ENCODE measurements at regions of chr5 and their contacts with region 1.

Region 1: GRCh38 chr5:16544607-16545374 is 72.0 kb downstream of the RETREG1 start:
- DNase-seq: no peak
- ATAC-seq: peak; percentile 69 to 87 (median 84)
- H3K4me3 ChIP-seq: no peak overlapping the region
- H3K27ac ChIP-seq: peak overlapping the region; percentile 84
- H3K4me1 ChIP-seq: peaks cover 62% of the 10 kb centered on the region
- H3K27me3 ChIP-seq: no peaks in the 10 kb centered on the region
- CTCF ChIP-seq: no peak

Region 2: DNA sequence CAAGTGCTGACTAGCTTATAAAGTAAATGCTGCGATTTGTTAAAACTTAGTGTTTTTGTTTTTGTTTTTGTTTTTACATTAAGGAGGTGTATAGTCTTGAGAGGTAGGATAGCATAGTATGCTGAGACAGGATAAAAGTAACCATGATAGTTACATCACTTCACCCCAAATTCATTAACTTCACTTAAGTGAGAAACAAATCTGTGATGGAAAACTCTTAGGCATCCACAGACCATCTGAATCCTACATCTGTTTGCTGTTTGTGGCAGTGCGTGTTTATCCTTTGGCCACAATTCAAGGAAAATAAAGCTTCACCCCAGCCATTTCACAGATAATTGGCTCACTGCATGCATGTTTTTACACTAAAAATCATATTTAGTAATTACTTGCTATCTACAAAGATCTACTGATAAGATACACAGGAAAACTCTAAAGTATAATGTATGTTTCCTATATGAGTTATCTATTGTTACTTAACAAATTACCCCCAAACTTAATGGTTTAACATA is 161.2 kb before region 1 on chr5:
- intact Hi-C with region 1: no loop called
- DNase-seq: no peak
- ATAC-seq: no peak
- H3K4me3 ChIP-seq: no peak overlapping the region
- H3K27ac ChIP-seq: no peak overlapping the region
- H3K4me1 ChIP-seq: no peaks in the 10 kb centered on the region
- H3K27me3 ChIP-seq: peaks cover 0 to 5% (median 0%) of the 10 kb centered on the region in 3 donors
- CTCF ChIP-seq: no peak

Region 3: GRCh38 chr5:16508730-16509531 is 35.9 kb before region 1 on chr5:
- intact Hi-C with region 1: loop called (anchors 2 to 5 kb)
- DNase-seq: peak; percentile 66 to 92
- ATAC-seq: peak; percentile 89 to 97 (median 92)
- H3K4me3 ChIP-seq: peak overlapping the region; percentile 68
- H3K27ac ChIP-seq: peak overlapping the region; percentile 95
- H3K4me1 ChIP-seq: peaks cover 8% of the 10 kb centered on the region
- H3K27me3 ChIP-seq: no peaks in the 10 kb centered on the region
- CTCF ChIP-seq: no peak